ENCODE measurements at regions of chr12 and their contacts with region 1.

Region 1: GRCh38 chr12:50637870-50638481 is 125.9 kb upstream of the ATF1 start:
- DNase-seq: no peak
- ATAC-seq: peak; percentile 47
- H3K4me3 Mint-ChIP-seq: no peak overlapping the region
- H3K27ac Mint-ChIP-seq: peak overlapping the region; percentile 26
- H3K4me1 Mint-ChIP-seq: peaks cover 10% of the 10 kb centered on the region
- H3K27me3 Mint-ChIP-seq: no peaks in the 10 kb centered on the region
- CTCF ChIP-seq: no peak

Region 2: DNA sequence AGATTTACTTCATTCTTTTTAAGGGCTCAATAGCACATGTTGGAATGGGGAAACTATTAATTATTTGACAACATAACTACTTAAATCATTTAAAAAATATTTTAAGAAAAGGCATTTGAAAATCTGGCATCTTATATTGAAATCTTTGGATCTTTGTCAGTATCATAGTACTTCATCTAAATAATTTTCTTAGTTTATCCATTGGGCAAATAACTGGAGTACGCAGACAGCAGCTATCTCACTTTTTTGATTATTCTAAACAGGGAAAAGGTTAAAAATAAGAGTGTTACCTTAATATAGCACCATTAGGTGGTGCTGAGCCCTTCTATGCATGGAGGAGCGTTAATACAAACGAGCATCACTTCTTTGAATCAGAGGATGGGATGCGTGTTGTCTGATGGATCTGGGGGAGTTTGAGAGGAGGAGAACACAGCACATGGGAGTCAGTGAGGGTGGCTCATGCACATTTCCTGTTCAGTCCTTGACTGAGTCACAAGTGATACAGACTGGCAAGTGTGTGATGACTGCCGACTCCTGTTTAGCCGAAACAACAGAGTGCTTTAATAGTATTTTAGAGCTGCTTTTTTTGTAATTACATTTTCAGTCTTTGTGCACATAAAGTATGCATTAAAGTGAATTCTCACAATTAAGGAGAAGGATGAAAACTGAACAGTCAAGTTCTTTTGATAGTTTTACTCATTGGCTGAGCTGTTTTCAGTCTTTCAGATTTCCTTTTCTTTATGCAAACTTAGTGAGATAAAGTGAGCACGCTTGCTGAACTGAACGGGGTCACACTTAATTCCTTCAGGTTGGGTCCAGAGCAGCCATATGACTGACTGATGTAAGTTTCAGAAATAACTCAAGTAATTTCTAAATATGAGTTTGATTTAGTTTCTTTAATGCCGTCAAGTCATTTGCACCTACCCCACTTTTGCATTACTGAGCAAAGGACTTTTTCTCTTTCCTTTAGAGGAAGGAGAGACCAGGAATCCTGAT is 40.5 kb before region 1 on chr12:
- CTCF ChIA-PET with region 1: interaction called, 4 read pairs
- POLR2A ChIA-PET with region 1: interaction called, 4 read pairs
- intact Hi-C with region 1: loop called (anchors 5 kb)
- DNase-seq: no peak
- ATAC-seq: peak; percentile 96
- H3K4me3 Mint-ChIP-seq: peak overlapping the region; percentile 60
- H3K27ac Mint-ChIP-seq: peak overlapping the region; percentile 85
- H3K4me1 Mint-ChIP-seq: peaks cover 49% of the 10 kb centered on the region
- H3K27me3 Mint-ChIP-seq: no peaks in the 10 kb centered on the region
- CTCF ChIP-seq: no peak

Region 3: DNA sequence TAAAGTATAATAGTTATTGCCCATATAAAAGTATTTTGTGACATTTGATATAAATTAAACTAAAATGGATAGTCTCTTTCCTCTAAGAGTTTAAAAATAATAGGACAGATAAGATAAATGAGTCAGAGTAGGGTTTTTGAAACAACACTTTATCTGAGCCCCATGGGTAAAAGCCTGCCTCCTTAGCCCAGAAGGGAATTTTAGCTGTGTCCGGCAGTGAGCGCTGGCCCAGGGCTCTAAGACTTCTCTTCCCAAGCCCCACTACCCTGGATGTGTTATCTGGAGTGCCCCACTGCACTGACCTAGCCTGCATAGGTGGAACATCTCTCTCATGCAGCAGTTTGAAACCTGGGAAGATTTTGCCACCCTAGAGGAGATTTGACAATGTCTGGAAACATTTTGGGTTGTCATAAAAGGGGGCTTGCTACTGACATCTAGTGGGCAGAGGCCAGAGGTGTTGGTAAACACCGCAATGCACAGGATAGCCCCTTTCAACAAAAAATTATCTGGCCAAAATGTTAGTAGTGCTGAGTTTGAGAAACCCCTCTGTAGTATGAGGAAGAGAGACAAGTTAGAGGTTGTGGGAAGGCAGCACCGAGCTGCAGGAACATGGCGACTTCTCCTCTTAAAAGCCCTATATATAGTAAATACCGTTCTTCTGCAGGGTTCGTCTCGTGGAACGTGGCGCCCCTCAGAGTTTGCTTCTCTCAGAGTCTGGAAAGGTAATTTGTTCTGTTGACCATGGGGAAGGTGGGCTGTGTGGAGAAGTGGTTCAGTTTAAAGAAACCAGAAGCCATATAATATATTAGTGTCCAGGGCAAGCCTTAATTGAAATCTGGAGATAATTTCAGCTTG is 96.7 kb after region 1 on chr12:
- CTCF ChIA-PET with region 1: no interaction called
- POLR2A ChIA-PET with region 1: no interaction called
- intact Hi-C with region 1: loop called (anchors 5 kb)
- DNase-seq: no peak
- ATAC-seq: no peak
- H3K4me3 Mint-ChIP-seq: no peak overlapping the region
- H3K27ac Mint-ChIP-seq: no peak overlapping the region
- H3K4me1 Mint-ChIP-seq: no peaks in the 10 kb centered on the region
- H3K27me3 Mint-ChIP-seq: no peaks in the 10 kb centered on the region
- CTCF ChIP-seq: no peak

Region 4: GRCh38 chr12:50934981-50935807 is 297.2 kb after region 1 on chr12:
- CTCF ChIA-PET with region 1: no interaction called
- POLR2A ChIA-PET with region 1: no interaction called
- intact Hi-C with region 1: no loop called
- DNase-seq: no peak
- ATAC-seq: no peak
- H3K4me3 Mint-ChIP-seq: no peak overlapping the region
- H3K27ac Mint-ChIP-seq: peak overlapping the region; percentile 24
- H3K4me1 Mint-ChIP-seq: peaks cover 50% of the 10 kb centered on the region
- H3K27me3 Mint-ChIP-seq: no peaks in the 10 kb centered on the region
- CTCF ChIP-seq: no peak